ENCODE measurements at regions of chr1 and their contacts with region 1.

Region 1: DNA sequence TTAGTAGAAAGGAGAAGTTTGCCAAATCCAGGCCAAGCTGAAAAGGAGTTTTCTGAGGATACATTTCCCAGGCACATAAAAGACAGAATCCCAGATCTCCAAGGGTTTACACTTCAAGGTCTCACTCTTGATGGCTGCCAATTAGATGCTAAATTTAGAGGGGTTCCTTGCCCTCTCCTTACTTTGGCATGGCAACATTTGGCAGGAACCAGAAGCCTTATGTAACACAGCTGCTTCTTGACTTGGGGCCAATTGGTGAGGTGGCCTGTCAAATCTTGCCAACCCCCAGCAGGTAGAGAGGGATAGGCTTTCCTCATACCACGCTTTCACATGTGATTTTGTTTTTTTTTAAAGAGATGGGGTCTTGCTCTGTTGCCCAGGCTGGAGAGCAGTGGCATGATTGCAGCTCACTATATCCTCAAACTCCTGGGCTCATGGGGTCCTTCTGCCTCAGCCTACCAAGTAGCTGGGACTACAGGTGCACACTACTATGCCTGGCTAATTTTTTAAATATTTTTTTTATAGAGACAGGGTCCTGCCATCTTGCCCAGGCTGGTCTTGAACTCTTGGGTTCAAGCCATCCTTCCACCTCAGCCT is 25.2 kb upstream of the NKAIN1 start:
- DNase-seq: no peak
- ATAC-seq: no peak
- H3K4me3 ChIP-seq: no peak overlapping the region
- H3K4me3 Mint-ChIP-seq: no peak overlapping the region
- H3K27ac ChIP-seq: no peak overlapping the region
- H3K27ac Mint-ChIP-seq: peak overlapping the region in 1 of 2 donors; percentile 34
- H3K4me1 ChIP-seq: no peaks in the 10 kb centered on the region
- H3K4me1 Mint-ChIP-seq: no peaks in the 10 kb centered on the region
- H3K27me3 ChIP-seq: no peaks in the 10 kb centered on the region
- H3K27me3 Mint-ChIP-seq: no peaks in the 10 kb centered on the region

Region 2: GRCh38 chr1:32249831-32250525 is 985.1 kb after region 1 on chr1:
- CTCF ChIA-PET with region 1: no interaction called
- POLR2A ChIA-PET with region 1: interaction called in 1 of 2 experiments, 11 read pairs
- DNase-seq: peak; percentile 67 to 92 (median 81)
- ATAC-seq: peak; percentile 76 to 85 (median 80)
- H3K4me3 ChIP-seq: peak overlapping the region; percentile 84 to 97
- H3K4me3 Mint-ChIP-seq: peak overlapping the region; percentile 91 to 100 (median 100)
- H3K27ac ChIP-seq: peak overlapping the region; percentile 96
- H3K27ac Mint-ChIP-seq: peak overlapping the region; percentile 100
- H3K4me1 ChIP-seq: peaks cover 28 to 63% of the 10 kb centered on the region in 2 experiments
- H3K4me1 Mint-ChIP-seq: peaks cover 49 to 83% (median 73%) of the 10 kb centered on the region in 3 donors
- H3K27me3 ChIP-seq: no peaks in the 10 kb centered on the region
- H3K27me3 Mint-ChIP-seq: no peaks in the 10 kb centered on the region

Measured in T-cell (primary cell).